GM12878 (cell line): ENCODE measurements at regions of chr15 and their contacts with region 1.

Region 1: DNA sequence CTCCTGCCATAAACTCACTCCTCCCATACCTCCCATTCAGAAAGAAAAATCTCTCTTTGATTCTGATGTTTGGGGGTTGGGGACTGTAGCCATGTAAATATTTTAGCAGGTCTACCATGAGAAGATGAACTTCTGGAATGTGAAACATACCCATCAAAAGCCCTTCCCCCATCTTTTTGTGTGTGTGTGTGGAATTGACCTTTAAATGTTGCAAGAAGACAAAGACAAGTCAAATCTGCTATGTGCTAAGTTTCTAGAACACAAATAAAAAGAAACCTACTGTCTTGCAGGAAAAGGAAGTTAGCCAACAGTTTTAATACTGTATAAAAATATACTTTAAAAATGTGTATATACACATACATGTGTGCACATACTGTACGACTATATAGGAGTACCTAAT is 29.7 kb upstream of the USP50 start:
- DNase-seq: no peak
- ATAC-seq: no peak
- H3K4me3 ChIP-seq: no peak overlapping the region
- H3K27ac ChIP-seq: no peak overlapping the region
- H3K4me1 ChIP-seq: no peaks in the 10 kb centered on the region
- H3K27me3 ChIP-seq: no peaks in the 10 kb centered on the region
- CTCF ChIP-seq: no peak
- EP300 ChIP-seq: no peak
- POLR2A ChIP-seq: no peak
- RAD21 ChIP-seq: no peak

Region 2: GRCh38 chr15:50256188-50257041 is 319.8 kb before region 1 on chr15:
- CTCF ChIA-PET with region 1: no interaction called
- POLR2A ChIA-PET with region 1: no interaction called
- RAD21 ChIA-PET with region 1: no interaction called
- SMC1A ChIA-PET with region 1: no interaction called
- in situ Hi-C with region 1: no loop called
- intact Hi-C with region 1: no loop called
- DNase-seq: no peak
- ATAC-seq: no peak
- H3K4me3 ChIP-seq: no peak overlapping the region
- H3K27ac ChIP-seq: no peak overlapping the region
- H3K4me1 ChIP-seq: peaks cover 11% of the 10 kb centered on the region
- H3K27me3 ChIP-seq: no peaks in the 10 kb centered on the region; a peak in 1 of 4 replicates
- CTCF ChIP-seq: no peak
- EP300 ChIP-seq: no peak
- POLR2A ChIP-seq: no peak
- RAD21 ChIP-seq: no peak

Region 3: GRCh38 chr15:50613600-50613999 is 37.4 kb after region 1 on chr15:
- CTCF ChIA-PET with region 1: no interaction called
- POLR2A ChIA-PET with region 1: no interaction called
- RAD21 ChIA-PET with region 1: no interaction called
- SMC1A ChIA-PET with region 1: no interaction called
- in situ Hi-C with region 1: no loop called
- intact Hi-C with region 1: loop called (anchors 5 kb)
- DNase-seq: no peak
- ATAC-seq: no peak
- H3K4me3 ChIP-seq: no peak overlapping the region
- H3K27ac ChIP-seq: no peak overlapping the region
- H3K4me1 ChIP-seq: no peaks in the 10 kb centered on the region
- H3K27me3 ChIP-seq: no peaks in the 10 kb centered on the region
- CTCF ChIP-seq: no peak
- EP300 ChIP-seq: no peak
- POLR2A ChIP-seq: no peak
- RAD21 ChIP-seq: no peak

Region 4: GRCh38 chr15:50641288-50641687 is 65.1 kb after region 1 on chr15:
- CTCF ChIA-PET with region 1: no interaction called
- POLR2A ChIA-PET with region 1: no interaction called
- RAD21 ChIA-PET with region 1: no interaction called
- SMC1A ChIA-PET with region 1: no interaction called
- in situ Hi-C with region 1: no loop called
- intact Hi-C with region 1: no loop called
- DNase-seq: no peak
- ATAC-seq: no peak
- H3K4me3 ChIP-seq: no peak overlapping the region
- H3K27ac ChIP-seq: no peak overlapping the region
- H3K4me1 ChIP-seq: no peaks in the 10 kb centered on the region
- H3K27me3 ChIP-seq: no peaks in the 10 kb centered on the region
- CTCF ChIP-seq: no peak
- EP300 ChIP-seq: no peak
- POLR2A ChIP-seq: no peak
- RAD21 ChIP-seq: no peak